Activated B cell treated with CpG ODN at 0.5 μM for 24 hours (primary cell): ENCODE measurements at regions of chr2 and their contacts with region 1.

Region 1: DNA sequence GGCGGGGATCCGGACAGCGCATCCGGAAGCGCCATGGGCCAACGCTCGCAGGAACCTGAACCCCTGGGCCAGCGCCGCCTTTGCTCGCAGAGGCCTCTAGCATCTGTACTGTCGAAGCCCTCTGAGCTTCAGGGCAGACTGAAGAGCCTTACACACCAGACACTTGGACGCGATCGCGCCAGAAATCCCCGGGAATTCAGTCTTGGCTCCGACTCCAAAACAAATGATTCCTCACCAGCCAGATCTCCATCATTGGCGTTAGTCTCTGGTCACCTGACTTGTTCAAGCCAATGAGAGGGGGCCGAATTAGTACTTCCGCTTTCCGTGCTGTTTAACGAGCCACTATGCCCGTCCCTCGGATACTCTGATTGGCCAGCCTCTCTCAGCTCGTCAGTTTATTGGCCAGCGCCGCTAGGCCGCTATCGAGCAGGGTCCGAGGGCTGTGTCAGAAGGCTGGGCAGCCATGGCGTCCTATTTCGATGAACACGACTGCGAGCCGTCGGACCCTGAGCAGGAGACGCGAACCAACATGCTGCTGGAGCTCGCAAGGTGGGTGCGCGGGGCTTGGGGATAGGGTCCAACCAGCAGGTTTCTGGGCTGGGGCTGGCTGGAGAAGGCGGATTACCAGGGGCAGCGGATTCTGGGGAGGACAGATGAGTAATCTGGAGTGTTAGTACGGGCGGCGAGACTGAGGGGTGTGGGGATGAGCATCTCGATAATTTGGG is at the start of gene RNF181:
- DNase-seq: peak; percentile 71
- ATAC-seq: peak; percentile 99
- H3K4me3 Mint-ChIP-seq: peak within 1 kb of the TSS; percentile 99
- H3K27ac Mint-ChIP-seq: peak within 1 kb of the TSS; percentile 97
- H3K4me1 Mint-ChIP-seq: peaks cover 36% of the 10 kb centered on the region
- H3K27me3 Mint-ChIP-seq: no peaks in the 10 kb centered on the region
- CTCF ChIP-seq: no peak
- total RNA-seq, gene RNF181: 104 and 108 TPM in 2 replicates

Region 2: GRCh38 chr2:85561317-85561979 is 34.0 kb before region 1 on chr2 and contains the start of gene GGCX:
- CTCF ChIA-PET with region 1: no interaction called
- POLR2A ChIA-PET with region 1: interaction called, 26 read pairs
- intact Hi-C with region 1: loop called (anchors 1 kb)
- DNase-seq: peak; percentile 84
- ATAC-seq: peak; percentile 88
- H3K4me3 Mint-ChIP-seq: peak within 1 kb of the TSS; percentile 98
- H3K27ac Mint-ChIP-seq: peak within 1 kb of the TSS; percentile 98
- H3K4me1 Mint-ChIP-seq: peaks cover 38% of the 10 kb centered on the region
- H3K27me3 Mint-ChIP-seq: no peaks in the 10 kb centered on the region
- CTCF ChIP-seq: no peak
- total RNA-seq, gene GGCX: 30.0 and 30.7 TPM in 2 replicates

Region 3: GRCh38 chr2:85570297-85570696 is 25.2 kb before region 1 on chr2:
- CTCF ChIA-PET with region 1: no interaction called
- POLR2A ChIA-PET with region 1: interaction called, 15 read pairs
- intact Hi-C with region 1: no loop called
- DNase-seq: no peak
- ATAC-seq: no peak
- H3K4me3 Mint-ChIP-seq: no peak overlapping the region
- H3K27ac Mint-ChIP-seq: no peak overlapping the region
- H3K4me1 Mint-ChIP-seq: no peaks in the 10 kb centered on the region
- H3K27me3 Mint-ChIP-seq: no peaks in the 10 kb centered on the region
- CTCF ChIP-seq: no peak

Region 4: DNA sequence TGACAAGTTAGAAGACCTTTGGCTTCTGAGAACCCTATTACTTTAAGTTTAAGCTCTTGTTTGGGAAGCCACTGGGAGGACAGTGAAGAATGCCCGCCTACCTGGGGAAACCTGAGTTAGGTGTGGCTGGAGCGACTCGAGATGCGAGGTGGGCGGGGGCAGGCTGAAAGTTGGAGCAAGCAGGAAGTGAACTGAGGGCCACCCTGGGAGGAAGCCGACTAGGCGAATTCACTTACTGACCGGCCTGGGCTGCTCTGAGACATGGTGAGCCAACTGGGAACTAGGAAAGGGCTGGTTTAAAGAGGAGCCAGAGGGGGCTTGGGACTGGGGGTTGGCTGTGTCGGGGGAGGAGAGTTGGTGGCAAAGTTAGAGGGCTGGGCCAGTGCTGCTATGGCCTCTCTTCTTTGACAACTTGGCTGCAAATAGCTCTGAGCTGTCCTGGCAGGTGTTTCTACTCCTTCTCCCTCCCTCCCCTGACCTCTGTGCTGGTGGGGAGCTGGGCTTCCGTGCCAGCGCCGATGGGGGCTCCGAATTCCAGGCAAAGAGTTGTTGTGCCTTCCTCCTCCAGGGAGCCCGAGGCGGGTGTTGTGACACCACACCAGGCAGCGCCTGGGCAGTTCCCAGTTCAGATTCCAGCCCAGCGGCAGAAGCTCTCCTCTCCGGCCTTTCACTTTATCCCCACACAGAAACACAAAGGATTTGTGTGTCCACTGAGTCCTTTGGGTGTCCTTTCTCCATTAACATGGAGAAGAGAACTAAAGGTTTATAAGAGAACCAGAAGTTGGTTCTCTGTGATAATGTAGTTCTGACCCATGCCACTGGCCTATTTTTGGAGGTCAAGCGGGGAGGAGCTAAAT is 17.8 kb before region 1 on chr2 and contains the start of gene VAMP8:
- CTCF ChIA-PET with region 1: no interaction called
- POLR2A ChIA-PET with region 1: interaction called, 59 read pairs
- intact Hi-C with region 1: loop called (anchors 1 kb)
- DNase-seq: peak; percentile 56
- ATAC-seq: peak; percentile 76
- H3K4me3 Mint-ChIP-seq: peak within 1 kb of the TSS; percentile 94
- H3K27ac Mint-ChIP-seq: peak within 1 kb of the TSS; percentile 93
- H3K4me1 Mint-ChIP-seq: peaks cover 37% of the 10 kb centered on the region
- H3K27me3 Mint-ChIP-seq: no peaks in the 10 kb centered on the region
- CTCF ChIP-seq: no peak
- total RNA-seq, gene VAMP8: 128 and 145 TPM in 2 replicates

Region 5: GRCh38 chr2:85584857-85585783 is 10.3 kb before region 1 on chr2:
- CTCF ChIA-PET with region 1: no interaction called
- POLR2A ChIA-PET with region 1: interaction called, 59 read pairs
- intact Hi-C with region 1: loop called (anchors 1 kb)
- DNase-seq: no peak
- ATAC-seq: peak; percentile 43
- H3K4me3 Mint-ChIP-seq: peak overlapping the region; percentile 82
- H3K27ac Mint-ChIP-seq: peak overlapping the region; percentile 63
- H3K4me1 Mint-ChIP-seq: peaks cover 46% of the 10 kb centered on the region
- H3K27me3 Mint-ChIP-seq: no peaks in the 10 kb centered on the region
- CTCF ChIP-seq: no peak

Region 6: GRCh38 chr2:85611705-85612587 is 16.5 kb after region 1 on chr2 and contains the start of gene C2orf68:
- CTCF ChIA-PET with region 1: interaction called, 4 read pairs
- POLR2A ChIA-PET with region 1: interaction called, 24 read pairs
- intact Hi-C with region 1: loop called (anchors 1 kb)
- DNase-seq: peak; percentile 81
- ATAC-seq: peak; percentile 73
- H3K4me3 Mint-ChIP-seq: peak within 1 kb of the TSS; percentile 98
- H3K27ac Mint-ChIP-seq: peak within 1 kb of the TSS; percentile 91
- H3K4me1 Mint-ChIP-seq: peaks cover 39% of the 10 kb centered on the region
- H3K27me3 Mint-ChIP-seq: no peaks in the 10 kb centered on the region
- CTCF ChIP-seq: no peak
- total RNA-seq, gene C2orf68: 49.7 and 61.5 TPM in 2 replicates